ENCODE measurements at regions of chr18 and their contacts with region 1.

Region 1: DNA sequence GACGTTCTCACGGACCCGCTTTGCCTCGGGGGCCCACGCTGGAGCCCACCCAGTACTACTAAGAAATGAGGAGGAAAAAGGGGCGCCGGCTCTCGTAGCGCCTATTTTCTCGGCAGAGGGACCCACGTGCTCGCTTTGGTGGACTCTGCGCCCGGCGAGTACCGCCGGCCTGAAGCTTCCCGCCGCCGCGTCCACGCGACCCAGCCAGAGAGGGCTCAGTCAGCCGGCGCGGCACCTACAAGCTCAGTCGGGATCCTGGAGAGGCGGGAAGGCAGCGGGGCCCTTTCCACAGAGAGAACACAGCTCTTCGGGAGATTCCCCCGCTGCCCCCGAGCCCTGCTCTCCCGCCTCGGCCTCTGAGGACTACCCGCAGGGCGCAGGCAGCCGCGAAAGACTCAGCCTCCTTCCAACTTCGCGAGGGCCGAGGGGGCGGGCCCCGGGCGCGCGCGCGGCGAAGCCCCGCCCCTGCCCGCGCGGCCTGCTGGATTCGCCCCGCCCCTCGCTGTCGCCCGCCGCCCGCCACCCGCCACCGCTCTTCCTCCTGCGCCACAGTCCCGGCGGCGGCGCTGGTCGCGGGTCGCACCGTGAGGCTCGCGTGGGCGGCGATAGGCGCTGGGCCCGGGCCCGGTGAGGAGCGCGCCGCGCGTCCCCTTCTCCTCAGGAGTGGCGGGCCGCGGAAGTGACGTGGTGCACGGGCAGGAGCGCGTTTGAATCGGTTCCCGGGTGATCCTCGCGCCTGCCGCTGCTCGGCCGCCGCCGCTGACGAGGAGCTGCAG is at the start of gene SMCHD1:
- DNase-seq: no peak
- H3K4me3 ChIP-seq: peak within 1 kb of the TSS; percentile 86
- H3K27ac ChIP-seq: peak within 1 kb of the TSS; percentile 92
- H3K27me3 ChIP-seq: no peaks in the 10 kb centered on the region
- CTCF ChIP-seq: no peak
- polyA plus RNA-seq, gene SMCHD1: 24.4 and 37.2 TPM in 2 replicates

Region 2: DNA sequence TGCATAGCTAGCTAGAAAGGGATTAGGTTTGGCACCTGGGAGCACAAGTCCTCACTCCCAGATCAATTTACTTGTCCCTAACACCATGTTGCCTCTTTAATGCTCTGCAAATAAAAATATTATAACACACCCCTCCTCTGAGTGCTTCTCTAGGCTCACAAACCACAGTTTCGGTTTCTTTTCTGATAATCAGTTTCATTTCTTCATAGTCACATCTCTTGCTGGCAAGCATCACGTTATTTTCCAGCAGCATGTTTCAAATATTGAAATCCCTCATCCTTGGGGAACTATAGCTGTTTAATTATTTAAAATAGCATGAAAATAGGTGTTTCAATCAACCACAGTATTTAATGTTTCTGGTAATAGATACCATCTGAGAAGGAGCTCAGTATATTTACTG is 13.7 kb before region 1 on chr18:
- CTCF ChIA-PET with region 1: no interaction called
- POLR2A ChIA-PET with region 1: interaction called, 12 read pairs
- DNase-seq: no peak
- H3K4me3 ChIP-seq: no peak overlapping the region
- H3K27ac ChIP-seq: no peak overlapping the region
- H3K27me3 ChIP-seq: no peaks in the 10 kb centered on the region
- CTCF ChIP-seq: no peak